ENCODE measurements at regions of chr5 and their contacts with region 1.

Region 1: DNA sequence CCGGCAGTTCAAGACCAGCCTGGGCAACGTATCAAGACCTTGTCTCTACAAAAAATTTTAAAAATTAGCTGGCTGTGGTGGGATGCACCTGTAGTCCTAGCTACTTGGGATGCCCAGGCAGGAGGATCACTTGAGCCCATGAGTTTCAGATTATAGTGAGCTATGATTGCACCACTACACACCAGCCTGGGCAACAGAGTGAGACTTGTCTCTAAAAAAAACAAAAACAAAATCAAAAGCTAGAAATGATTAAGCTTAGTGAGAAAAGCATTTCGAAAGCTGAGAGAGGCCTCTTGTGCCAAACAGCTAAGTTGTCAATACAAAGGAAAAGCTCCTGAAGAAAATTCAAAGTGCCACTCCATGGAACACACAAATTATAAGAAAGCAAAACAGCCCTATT is 4.8 kb downstream of the FAM151B start:
- DNase-seq: no peak
- H3K4me3 ChIP-seq: no peak overlapping the region
- H3K27ac ChIP-seq: no peak overlapping the region
- H3K4me1 ChIP-seq: peaks cover 0 to 16% (median 7%) of the 10 kb centered on the region in 4 donors
- H3K27me3 ChIP-seq: no peaks in the 10 kb centered on the region
- CTCF ChIP-seq: no peak
- EP300 ChIP-seq: no peak
- POLR2A ChIP-seq: no peak

Region 2: DNA sequence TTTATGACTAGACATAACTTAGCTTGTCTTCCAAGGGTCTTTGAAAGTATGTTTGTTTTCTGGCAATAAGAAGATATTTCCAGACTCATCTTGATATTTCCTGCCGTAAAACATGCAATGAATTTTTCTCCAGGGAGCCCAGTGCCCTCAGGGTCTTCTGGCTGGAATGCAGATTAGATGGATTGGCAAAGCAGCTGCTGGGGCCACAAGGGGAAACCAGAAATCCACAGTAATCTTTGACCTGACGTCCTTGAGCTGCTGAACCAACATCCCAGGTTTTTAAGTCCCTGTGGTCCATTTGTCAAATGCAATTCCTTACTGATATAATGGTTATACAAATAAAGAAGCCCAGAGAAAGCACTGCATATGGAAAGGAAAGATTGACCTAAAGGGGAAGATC is 364.6 kb before region 1 on chr5:
- intact Hi-C with region 1: no loop called
- DNase-seq: peak in 1 of 2 donors; percentile 52
- H3K4me3 ChIP-seq: no peak overlapping the region
- H3K27ac ChIP-seq: no peak overlapping the region
- H3K4me1 ChIP-seq: no peaks in the 10 kb centered on the region
- H3K27me3 ChIP-seq: no peaks in the 10 kb centered on the region
- CTCF ChIP-seq: no peak
- EP300 ChIP-seq: no peak
- POLR2A ChIP-seq: no peak

Region 3: DNA sequence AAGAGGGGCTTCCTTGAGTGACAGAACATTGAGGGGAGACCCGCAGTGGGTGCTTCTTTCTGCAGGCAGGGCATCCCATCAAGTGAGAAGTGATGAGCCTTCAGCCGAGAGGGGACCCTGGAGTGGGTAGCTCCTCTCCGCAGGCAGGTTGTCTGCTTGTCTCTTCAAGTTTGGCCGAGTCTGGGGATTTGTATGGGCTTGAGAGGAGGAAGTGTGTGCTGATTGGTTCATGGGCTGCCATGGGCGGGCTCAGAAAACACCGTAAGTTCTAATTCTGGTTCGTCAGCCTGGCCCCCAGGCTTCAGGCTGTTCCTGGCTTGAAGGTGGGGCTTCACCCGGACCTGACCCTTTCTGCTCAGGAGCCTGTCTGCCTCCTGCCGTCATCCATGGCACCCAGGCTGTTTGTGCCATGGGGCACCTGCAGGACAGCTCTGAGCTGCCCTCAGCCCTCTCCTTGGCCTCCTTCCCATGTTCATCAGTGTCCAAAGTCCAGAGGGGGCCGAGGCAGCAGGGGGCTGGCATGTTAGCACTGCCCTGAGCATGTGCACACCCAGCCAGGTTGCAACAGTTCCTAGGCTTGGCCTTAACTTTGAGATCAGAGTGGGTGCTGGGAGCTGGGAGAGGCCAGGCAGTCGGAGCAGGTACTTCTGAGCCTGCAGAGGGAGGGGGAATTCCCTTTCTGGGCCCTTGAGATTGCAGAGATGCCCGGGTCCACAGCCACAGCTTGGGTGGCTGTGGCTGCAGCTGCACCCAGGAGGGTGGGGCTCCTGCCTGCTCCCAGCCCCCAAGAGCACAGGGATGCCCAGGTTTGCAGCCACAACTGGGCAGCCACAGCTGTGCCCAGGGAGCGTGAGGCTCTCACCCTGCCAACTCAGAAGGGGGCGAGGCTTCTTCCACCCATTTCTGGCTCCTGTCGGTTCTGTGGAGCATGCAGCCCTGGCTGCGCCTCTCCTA is 175.6 kb after region 1 on chr5:
- intact Hi-C with region 1: loop called (anchors 10 kb)
- DNase-seq: peak in 1 of 2 donors; percentile 15
- H3K4me3 ChIP-seq: no peak overlapping the region
- H3K27ac ChIP-seq: no peak overlapping the region
- H3K4me1 ChIP-seq: peaks cover 0 to 7% (median 0%) of the 10 kb centered on the region in 4 donors
- H3K27me3 ChIP-seq: no peaks in the 10 kb centered on the region
- CTCF ChIP-seq: no peak
- EP300 ChIP-seq: no peak
- POLR2A ChIP-seq: no peak

Measured in stomach (tissue), 19 donors.